ENCODE measurements at regions of chr15 and their contacts with region 1.

Region 1: DNA sequence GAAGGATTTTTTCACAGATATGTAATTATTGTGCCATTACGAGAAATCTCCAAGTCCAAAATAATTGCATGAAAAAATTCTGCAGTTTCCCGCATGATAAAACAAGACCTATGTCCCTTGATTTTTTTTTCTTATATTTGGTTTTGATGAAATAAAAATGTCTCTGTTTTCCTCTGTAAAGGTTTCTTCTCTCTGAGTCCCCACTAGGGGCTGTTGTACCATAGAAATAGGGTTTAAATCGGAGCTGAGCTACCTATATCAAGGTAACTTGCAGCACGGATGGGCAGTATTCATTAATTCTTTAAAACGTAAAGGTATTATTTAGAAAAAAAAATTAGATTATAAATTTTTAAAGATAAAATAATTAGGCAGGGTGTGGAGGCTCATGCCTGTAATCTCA is 66.6 kb upstream of the IGF1R start:
- DNase-seq: no peak
- ATAC-seq: no peak
- H3K4me3 ChIP-seq: no peak overlapping the region
- H3K27ac ChIP-seq: no peak overlapping the region
- H3K4me1 ChIP-seq: peaks cover 0 to 7% (median 0%) of the 10 kb centered on the region in 9 donors
- H3K27me3 ChIP-seq: peaks cover 0 to 98% (median 82%) of the 10 kb centered on the region in 7 donors
- CTCF ChIP-seq: no peak

Region 2: GRCh38 chr15:97817276-97817890 is 764.3 kb before region 1 on chr15:
- intact Hi-C with region 1: no loop called
- DNase-seq: no peak
- ATAC-seq: no peak
- H3K4me3 ChIP-seq: no peak overlapping the region
- H3K27ac ChIP-seq: no peak overlapping the region
- H3K4me1 ChIP-seq: no peaks in the 10 kb centered on the region
- H3K27me3 ChIP-seq: no peaks in the 10 kb centered on the region
- CTCF ChIP-seq: no peak

Region 3: DNA sequence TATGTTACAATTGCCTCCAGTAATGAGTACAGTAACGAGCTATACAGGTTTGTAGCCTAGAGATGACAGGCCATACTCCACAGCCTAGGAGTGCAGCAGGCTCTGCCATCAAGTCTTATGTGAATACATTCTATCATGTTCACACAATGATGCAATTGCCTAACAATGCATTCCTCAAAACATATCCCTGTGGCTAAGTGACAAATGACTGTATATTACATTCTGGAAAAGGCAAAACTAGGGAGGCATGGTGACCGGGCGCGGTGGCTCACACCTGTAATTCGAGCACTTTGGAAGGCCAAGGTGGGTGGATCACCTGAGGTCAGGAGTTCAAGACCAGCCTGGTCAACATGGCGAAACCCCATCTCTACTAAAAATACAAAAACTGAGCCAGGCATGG is 125.8 kb before region 1 on chr15:
- intact Hi-C with region 1: no loop called
- DNase-seq: no peak
- ATAC-seq: no peak
- H3K4me3 ChIP-seq: no peak overlapping the region
- H3K27ac ChIP-seq: no peak overlapping the region
- H3K4me1 ChIP-seq: no peaks in the 10 kb centered on the region
- H3K27me3 ChIP-seq: peaks cover 0 to 4% (median 0%) of the 10 kb centered on the region in 7 donors
- CTCF ChIP-seq: no peak

Region 4: GRCh38 chr15:98620020-98620419 is 38.3 kb after region 1 on chr15:
- intact Hi-C with region 1: loop called in 1 of 10 experiments (anchors 5 kb)
- DNase-seq: no peak
- ATAC-seq: no peak
- H3K4me3 ChIP-seq: no peak overlapping the region
- H3K27ac ChIP-seq: no peak overlapping the region
- H3K4me1 ChIP-seq: no peaks in the 10 kb centered on the region
- H3K27me3 ChIP-seq: peaks cover 0 to 94% (median 75%) of the 10 kb centered on the region in 7 donors
- CTCF ChIP-seq: no peak

Region 5: DNA sequence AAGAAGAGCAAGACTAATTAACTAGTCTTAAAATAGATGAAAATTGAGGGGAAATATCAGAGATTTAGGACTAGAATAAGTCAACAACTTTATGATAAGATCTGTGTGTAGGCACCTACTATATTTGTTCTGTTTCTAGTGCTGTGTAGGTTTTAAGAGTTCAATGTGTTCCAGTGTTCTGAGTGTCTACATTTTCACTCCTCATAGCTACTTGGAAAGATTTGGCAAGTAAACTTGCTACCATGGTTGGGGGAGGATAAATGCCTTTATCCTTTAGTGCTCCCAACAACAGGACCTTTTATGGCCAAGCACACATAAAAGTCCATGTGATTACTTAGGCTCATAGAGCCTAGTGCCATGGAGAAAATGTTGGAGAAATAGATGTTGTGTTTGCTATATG is 1087.5 kb after region 1 on chr15:
- intact Hi-C with region 1: no loop called
- DNase-seq: no peak
- ATAC-seq: peak; percentile 39 to 93 (median 70)
- H3K4me3 ChIP-seq: no peak overlapping the region
- H3K27ac ChIP-seq: peak overlapping the region; percentile 3 to 67 (median 50)
- H3K4me1 ChIP-seq: peaks cover 0 to 43% (median 16%) of the 10 kb centered on the region in 9 donors
- H3K27me3 ChIP-seq: no peaks in the 10 kb centered on the region
- CTCF ChIP-seq: no peak

Measured in heart right ventricle (tissue), 16 donors.